Breast epithelium (tissue), 4 donors: ENCODE measurements at regions of chr10 and their contacts with region 1.

Region 1: DNA sequence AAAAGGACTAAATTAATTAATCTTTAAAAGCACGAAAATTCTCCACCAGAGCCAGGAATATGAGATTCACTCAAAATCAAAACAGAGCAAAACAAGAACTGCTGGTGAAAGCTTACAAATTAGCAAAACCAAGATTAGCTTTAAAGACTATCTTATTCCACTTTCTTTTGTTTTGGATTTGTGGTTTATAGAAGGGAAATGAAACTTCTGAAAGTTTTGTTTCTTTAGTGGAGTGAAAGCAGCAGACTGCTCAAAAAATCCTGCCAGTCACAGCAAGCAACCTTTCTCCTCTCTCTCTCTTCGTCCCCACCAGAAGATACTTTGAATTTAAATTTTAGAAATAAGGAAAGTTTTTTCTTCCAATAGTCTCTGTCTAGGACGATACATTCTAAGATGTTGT is 7.8 kb downstream of the ACTA2 start:
- DNase-seq: no peak
- H3K4me3 ChIP-seq: no peak overlapping the region
- H3K27ac ChIP-seq: no peak overlapping the region
- H3K4me1 ChIP-seq: no peaks in the 10 kb centered on the region
- H3K27me3 ChIP-seq: no peaks in the 10 kb centered on the region
- CTCF ChIP-seq: no peak
- POLR2A ChIP-seq: no peak

Region 2: DNA sequence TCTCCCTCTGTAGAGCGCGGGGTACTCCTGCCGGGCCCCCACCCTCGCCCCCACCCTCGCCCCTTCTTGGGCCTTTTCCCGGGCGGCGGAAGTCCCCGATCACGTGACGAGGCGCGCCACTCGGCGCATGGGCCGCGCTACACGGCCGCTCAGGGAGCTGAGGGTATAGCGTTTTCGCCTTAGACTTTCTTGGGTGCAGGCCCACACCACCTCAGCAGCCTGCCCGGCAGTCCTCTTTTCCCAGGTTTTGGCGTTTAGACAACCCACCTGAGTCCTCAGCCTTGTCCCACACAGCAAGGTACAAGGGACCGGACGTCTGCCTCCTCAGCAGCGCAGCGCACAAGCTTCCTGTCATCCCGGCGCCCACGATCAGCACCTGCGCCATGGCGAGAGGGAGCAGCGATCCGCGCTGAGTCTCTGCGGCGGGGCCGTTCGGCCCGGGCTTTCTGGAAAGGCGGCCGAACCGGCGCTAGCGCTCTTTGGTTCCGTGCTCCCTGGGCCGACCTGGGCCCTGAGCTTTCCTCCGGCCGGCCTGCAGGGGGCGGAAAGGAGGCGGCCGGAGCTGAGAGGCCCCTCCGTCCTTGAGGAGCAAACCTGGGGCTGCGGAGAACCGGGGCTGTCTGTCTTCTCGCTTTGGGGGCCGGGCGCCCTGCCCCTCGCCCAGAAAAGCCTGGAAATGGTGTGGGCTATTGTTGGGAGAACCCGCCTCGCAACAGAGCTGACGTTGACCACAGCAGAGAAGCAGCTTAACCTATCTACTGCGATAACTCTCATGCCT is 361.8 kb before region 1 on chr10 and contains the start of gene RNLS:
- intact Hi-C with region 1: no loop called
- DNase-seq: peak; percentile 42 to 68
- H3K4me3 ChIP-seq: peak within 1 kb of the TSS; percentile 66 to 87 (median 77)
- H3K27ac ChIP-seq: peak within 1 kb of the TSS; percentile 96
- H3K4me1 ChIP-seq: no peaks in the 10 kb centered on the region
- H3K27me3 ChIP-seq: no peaks in the 10 kb centered on the region
- CTCF ChIP-seq: peak; percentile 67 to 86 (median 76)
- POLR2A ChIP-seq: no peak
- total RNA-seq, gene RNLS: 27.9 to 32.1 (median 29.1) TPM

Region 3: DNA sequence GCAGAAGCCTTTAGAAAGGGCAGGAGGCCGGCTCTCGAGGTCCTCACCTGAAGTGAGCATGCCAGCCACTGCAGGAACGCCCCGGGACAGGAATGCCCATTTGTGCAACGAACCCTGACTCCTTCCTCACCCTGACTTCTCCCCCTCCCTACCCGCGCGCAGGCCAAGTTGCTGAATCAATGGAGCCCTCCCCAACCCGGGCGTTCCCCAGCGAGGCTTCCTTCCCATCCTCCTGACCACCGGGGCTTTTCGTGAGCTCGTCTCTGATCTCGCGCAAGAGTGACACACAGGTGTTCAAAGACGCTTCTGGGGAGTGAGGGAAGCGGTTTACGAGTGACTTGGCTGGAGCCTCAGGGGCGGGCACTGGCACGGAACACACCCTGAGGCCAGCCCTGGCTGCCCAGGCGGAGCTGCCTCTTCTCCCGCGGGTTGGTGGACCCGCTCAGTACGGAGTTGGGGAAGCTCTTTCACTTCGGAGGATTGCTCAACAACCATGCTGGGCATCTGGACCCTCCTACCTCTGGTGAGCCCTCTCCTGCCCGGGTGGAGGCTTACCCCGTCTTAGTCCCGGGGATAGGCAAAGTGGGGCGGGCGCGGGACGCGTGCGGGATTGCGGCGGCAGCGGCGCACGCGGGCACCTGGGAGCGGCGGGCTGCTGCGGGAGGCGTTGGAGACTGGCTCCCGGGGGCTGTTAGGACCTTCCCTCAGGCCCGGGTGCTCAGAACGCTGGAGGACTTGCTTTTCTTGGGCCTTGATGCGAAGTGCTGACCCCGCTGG is 45.8 kb after region 1 on chr10 and contains the start of gene FAS:
- intact Hi-C with region 1: loop called (anchors 5 kb)
- DNase-seq: peak; percentile 62 to 75
- H3K4me3 ChIP-seq: peak within 1 kb of the TSS; percentile 90 to 98 (median 94)
- H3K27ac ChIP-seq: peak within 1 kb of the TSS; percentile 98 to 99
- H3K4me1 ChIP-seq: peaks cover 5 to 10% of the 10 kb centered on the region in 2 donors
- H3K27me3 ChIP-seq: no peaks in the 10 kb centered on the region
- CTCF ChIP-seq: no peak
- POLR2A ChIP-seq: no peak
- total RNA-seq, gene FAS: 26.9 to 51.5 (median 47.3) TPM

Region 4: GRCh38 chr10:89129911-89130310 is 185.1 kb after region 1 on chr10:
- intact Hi-C with region 1: no loop called
- DNase-seq: peak in 1 of 2 donors; percentile 31
- H3K4me3 ChIP-seq: no peak overlapping the region
- H3K27ac ChIP-seq: no peak overlapping the region
- H3K4me1 ChIP-seq: no peaks in the 10 kb centered on the region
- H3K27me3 ChIP-seq: no peaks in the 10 kb centered on the region
- CTCF ChIP-seq: no peak
- POLR2A ChIP-seq: no peak